ENCODE measurements at regions of chrX and their contacts with region 1.

Region 1: DNA sequence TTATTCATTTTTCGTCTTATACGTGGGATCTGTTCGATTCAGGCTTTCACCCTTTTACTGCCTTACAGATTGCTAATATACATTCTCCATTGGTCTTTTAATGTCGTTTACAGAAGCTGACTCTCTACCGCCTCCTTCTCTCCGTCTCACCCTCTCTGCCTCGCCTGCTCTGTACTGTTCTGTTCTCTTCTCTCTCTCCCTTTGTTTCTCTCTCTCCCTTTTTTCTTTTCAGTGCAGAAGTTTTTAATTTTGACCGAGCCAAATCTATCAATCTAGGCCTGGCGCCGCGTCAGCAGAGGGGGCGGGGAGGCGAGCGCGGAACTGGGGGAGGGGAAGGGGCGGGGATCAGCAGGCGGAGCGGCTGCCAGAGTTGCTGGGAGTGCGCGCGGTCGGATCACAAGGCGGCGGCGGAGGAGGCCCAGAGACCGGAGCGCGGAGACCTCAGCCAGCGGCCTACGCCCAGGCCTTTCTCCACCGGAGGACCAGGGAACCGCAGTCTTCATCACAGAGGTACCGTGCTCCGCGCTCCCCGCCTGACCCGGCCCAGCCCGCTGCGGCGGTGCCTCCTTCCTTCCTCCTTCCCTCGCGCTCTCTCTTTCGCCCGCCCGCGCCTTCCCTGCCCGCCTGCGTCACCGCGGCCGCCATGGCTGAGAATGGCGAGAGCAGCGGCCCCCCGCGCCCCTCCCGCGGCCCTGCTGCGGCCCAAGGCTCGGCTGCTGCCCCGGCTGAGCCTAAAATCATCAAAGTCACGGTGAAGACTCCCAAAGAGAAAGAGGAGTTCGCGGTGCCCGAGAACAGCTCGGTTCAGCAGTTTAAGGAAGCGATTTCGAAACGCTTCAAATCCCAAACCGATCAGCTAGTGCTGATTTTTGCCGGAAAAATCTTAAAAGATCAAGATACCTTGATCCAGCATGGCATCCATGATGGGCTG is at the start of gene UBQLN2:
- DNase-seq: peak; percentile 70 to 74
- ATAC-seq: peak; percentile 85 to 91
- H3K4me3 ChIP-seq: peak within 1 kb of the TSS; percentile 66 to 83 (median 80)
- H3K27ac ChIP-seq: peak within 1 kb of the TSS; percentile 90 to 98 (median 94)
- H3K4me1 ChIP-seq: peaks cover 20 to 25% of the 10 kb centered on the region in 2 donors
- H3K27me3 ChIP-seq: no peaks in the 10 kb centered on the region
- CTCF ChIP-seq: peak in 3 of 5 experiments; percentile 3 to 37 (median 20)
- POLR2A ChIP-seq: peak; percentile 76 to 78
- total RNA-seq, gene UBQLN2: 21.6 to 31.1 (median 25.4) TPM

Region 2: DNA sequence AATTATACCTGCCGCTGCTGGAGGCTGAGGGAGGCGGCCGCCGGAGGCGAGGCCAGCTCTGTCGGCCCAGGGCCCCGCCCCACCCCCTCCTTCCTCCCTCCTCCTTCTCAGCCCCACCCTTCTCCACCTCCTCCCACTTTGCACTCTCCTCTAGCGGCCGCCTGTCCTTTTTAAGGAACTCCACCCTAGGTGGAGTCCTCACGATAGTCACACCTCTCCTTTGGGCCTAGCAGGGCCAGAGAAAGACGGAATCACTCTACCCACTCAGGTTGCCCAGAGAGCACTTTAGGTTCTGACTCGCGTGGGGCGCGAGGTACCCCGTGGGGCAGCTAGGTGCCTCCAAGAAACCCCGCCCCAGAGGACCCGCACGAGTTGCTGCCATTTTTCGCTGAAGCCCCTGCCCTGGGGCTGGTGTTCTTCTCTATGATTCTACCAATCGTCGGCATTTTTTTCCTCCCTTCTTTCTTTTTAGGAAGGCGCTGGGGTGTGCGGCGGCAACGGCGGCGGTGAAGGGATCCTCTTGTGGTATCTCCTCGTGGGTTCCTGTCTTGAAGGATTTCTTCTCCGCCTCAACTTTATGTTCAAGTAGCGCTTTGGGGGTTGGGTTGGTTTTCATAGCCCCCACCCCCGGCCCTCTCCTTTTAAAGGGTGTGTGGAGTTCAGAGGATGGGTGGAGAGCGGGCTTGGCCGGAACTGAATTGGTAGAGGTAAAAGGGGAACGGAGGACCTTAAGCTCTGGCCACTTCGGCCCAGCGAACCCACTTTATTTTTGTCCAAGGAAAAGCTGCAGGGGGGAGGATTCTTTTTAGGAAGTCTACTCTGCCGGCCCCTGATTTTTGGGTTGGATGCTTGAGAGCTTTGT is 331.0 kb before region 1 on chrX and contains the start of gene KLF8:
- in situ Hi-C with region 1: no loop called
- intact Hi-C with region 1: loop called (anchors 5 kb)
- DNase-seq: peak; percentile 22 to 48
- ATAC-seq: peak; percentile 74 to 78
- H3K4me3 ChIP-seq: peak within 1 kb of the TSS; percentile 51 to 61 (median 60)
- H3K27ac ChIP-seq: peak within 1 kb of the TSS; percentile 76 to 80 (median 78)
- H3K4me1 ChIP-seq: peaks cover 0 to 3% of the 10 kb centered on the region in 2 donors
- H3K27me3 ChIP-seq: peaks cover 0 to 6% (median 0%) of the 10 kb centered on the region in 3 donors
- CTCF ChIP-seq: no peak
- POLR2A ChIP-seq: peak; percentile 27 to 32
- total RNA-seq, gene KLF8: 0.70 to 4.2 (median 3.3) TPM

Region 3: DNA sequence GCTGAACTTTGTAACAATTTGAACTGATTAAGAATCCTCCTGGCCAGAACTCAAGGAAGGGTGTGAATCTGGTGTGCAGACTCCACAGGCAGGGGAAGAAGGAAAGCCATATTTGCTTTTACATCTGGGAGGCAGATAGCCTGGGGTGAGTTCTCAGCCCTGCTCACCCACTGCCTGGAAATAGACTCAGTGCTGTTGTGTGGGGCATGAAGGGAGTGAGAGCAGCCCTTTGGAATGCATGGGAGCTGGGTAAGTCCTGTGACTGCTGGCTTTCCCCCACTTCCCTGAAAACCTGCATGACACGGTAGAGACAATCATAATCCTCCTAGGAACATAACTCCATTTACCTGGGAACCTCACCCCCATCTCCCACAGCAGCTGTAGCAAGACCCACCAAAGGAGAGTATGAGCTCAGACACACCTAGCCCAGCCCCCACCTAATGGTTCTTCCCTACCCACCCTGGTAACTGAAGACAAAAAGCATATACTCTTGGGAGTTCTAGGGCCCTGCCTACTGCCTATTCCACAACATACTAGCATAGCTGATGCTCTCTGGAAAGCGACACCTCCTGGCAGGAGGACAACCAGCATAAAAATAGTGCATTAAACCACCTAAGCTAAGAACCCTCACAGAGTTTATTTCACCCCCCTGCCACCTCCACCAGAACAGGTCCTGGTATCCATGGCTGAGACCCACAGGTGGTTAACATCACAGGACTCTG is 59.4 kb before region 1 on chrX:
- in situ Hi-C with region 1: no loop called
- intact Hi-C with region 1: no loop called
- DNase-seq: no peak
- ATAC-seq: no peak
- H3K4me3 ChIP-seq: no peak overlapping the region
- H3K27ac ChIP-seq: no peak overlapping the region
- H3K4me1 ChIP-seq: no peaks in the 10 kb centered on the region
- H3K27me3 ChIP-seq: peaks cover 0 to 5% (median 0%) of the 10 kb centered on the region in 3 donors
- CTCF ChIP-seq: no peak
- POLR2A ChIP-seq: no peak

Region 4: DNA sequence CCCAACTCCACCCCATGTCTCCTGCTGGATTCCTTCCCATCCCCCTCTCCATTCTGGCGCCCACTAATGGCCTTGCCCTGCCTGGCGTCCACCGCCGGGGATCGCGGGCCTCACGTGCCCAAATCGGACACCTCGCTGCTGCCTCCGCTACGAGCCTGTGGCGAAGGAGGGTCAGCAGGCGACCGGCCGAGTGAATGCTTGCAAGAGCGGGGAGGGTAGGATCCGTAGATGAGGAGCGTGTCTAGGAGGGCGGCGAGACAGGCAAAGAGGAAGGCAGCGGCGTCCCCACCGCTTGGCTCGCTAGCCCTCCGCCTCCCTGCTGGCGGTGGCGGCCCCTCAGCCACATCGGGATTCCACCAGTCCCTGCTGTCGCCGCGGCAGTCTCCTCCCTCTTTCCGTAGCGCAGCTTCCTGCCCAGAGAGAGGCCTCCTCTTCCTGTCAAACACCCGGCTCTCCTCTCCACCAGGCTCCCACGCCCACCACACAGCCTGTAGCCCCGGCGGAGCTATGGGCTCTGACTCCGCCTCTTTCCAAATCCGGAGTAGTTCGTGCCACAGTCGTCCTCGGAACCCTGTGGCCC is 557.8 kb after region 1 on chrX and contains the start of gene SPIN2B:
- in situ Hi-C with region 1: no loop called
- intact Hi-C with region 1: loop called (anchors 10 kb)
- DNase-seq: peak; percentile 54 to 68
- ATAC-seq: peak; percentile 97 to 98
- H3K4me3 ChIP-seq: peak within 1 kb of the TSS; percentile 63 to 71 (median 71)
- H3K27ac ChIP-seq: peak within 1 kb of the TSS; percentile 80 to 86 (median 85)
- H3K4me1 ChIP-seq: peaks cover 0 to 3% of the 10 kb centered on the region in 2 donors
- H3K27me3 ChIP-seq: no peaks in the 10 kb centered on the region
- CTCF ChIP-seq: peak in 1 of 5 experiments; percentile 24
- POLR2A ChIP-seq: peak; percentile 36 to 41
- total RNA-seq, gene SPIN2B: 3.2 to 9.0 (median 5.6) TPM

Region 5: GRCh38 chrX:57595381-57595811 is 1031.9 kb after region 1 on chrX:
- in situ Hi-C with region 1: no loop called
- intact Hi-C with region 1: loop called (anchors 10 kb)
- DNase-seq: no peak
- ATAC-seq: no peak
- H3K4me3 ChIP-seq: peak overlapping the region; percentile 13 to 38 (median 20)
- H3K27ac ChIP-seq: peak overlapping the region; percentile 23 to 64 (median 50)
- H3K4me1 ChIP-seq: peaks cover 20 to 36% of the 10 kb centered on the region in 2 donors
- H3K27me3 ChIP-seq: no peaks in the 10 kb centered on the region
- CTCF ChIP-seq: no peak
- POLR2A ChIP-seq: no peak